CD14-positive monocyte (primary cell): ENCODE measurements at regions of chr6 and their contacts with region 1.

Region 1: GRCh38 chr6:10901770-10902169 is 14.9 kb downstream of the SYCP2L start:
- DNase-seq: peak; percentile 59 to 84 (median 74)
- H3K4me3 ChIP-seq: peak overlapping the region; percentile 37 to 79 (median 75)
- H3K4me3 Mint-ChIP-seq: peak overlapping the region; percentile 78 to 88
- H3K27ac ChIP-seq: peak overlapping the region; percentile 33 to 87
- H3K27ac Mint-ChIP-seq: peak overlapping the region; percentile 87 to 94 (median 92)
- H3K4me1 ChIP-seq: peaks cover 12 to 16% of the 10 kb centered on the region in 2 donors
- H3K4me1 Mint-ChIP-seq: peaks cover 16% of the 10 kb centered on the region
- H3K27me3 ChIP-seq: no peaks in the 10 kb centered on the region
- H3K27me3 Mint-ChIP-seq: peaks cover 0 to 6% (median 0%) of the 10 kb centered on the region in 3 donors
- CTCF ChIP-seq: no peak

Region 2: GRCh38 chr6:12103158-12103557 is 1201.4 kb after region 1 on chr6:
- intact Hi-C with region 1: loop called in 1 of 2 experiments (anchors 10 kb)
- DNase-seq: no peak
- H3K4me3 ChIP-seq: no peak overlapping the region
- H3K4me3 Mint-ChIP-seq: no peak overlapping the region
- H3K27ac ChIP-seq: no peak overlapping the region
- H3K27ac Mint-ChIP-seq: no peak overlapping the region
- H3K4me1 ChIP-seq: no peaks in the 10 kb centered on the region
- H3K4me1 Mint-ChIP-seq: no peaks in the 10 kb centered on the region
- H3K27me3 ChIP-seq: no peaks in the 10 kb centered on the region
- H3K27me3 Mint-ChIP-seq: no peaks in the 10 kb centered on the region
- CTCF ChIP-seq: no peak